Adrenal gland (tissue), 19 donors: ENCODE measurements at regions of chr20 and their contacts with region 1.

Region 1: DNA sequence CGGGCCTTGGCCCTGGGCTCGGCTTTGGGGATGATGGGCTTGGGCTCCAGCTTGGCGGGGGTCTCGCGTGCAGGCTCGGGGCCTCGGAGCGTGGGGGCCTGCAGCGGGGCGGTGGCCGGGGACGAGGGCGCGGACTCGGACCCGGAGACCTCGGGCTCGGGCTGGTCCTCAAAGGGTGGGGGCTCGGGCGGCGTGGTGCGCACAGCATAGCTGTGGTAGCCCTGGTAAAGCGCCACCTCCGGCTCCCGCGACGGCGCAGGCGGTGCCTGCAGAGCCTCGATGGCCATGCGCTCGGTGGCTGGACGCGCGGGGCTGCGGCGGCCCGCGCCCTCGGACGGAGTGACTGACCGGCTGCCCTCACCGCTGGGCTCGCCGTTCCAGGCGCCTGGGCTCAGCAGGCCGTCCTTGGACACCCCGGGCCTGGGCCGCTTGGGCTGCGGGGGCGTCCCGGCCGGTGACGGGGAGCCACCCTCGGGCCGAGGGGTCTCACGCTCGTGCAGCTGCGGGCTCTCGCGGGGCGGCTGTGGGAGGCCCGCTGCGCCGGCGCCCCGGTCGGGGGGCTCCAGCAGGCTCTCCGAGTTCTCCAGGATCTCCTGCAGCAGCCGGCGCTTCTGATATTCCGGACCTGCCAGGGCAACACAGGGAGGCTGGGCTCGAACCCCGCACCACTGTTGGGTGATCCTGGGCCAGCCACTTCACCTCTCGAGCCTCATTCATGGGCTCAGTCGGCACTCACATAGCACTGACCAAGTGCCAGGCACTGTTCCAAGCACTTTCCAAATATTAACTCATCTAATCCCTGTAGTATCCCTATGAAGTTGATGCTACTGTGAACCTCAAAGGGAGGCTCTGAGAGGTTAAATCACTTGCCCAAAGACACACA is 71.0 kb downstream of the JPH2 start:
- DNase-seq: no peak
- H3K4me3 ChIP-seq: no peak overlapping the region
- H3K27ac ChIP-seq: no peak overlapping the region
- H3K4me1 ChIP-seq: no peaks in the 10 kb centered on the region
- H3K27me3 ChIP-seq: peaks cover 9% of the 10 kb centered on the region
- CTCF ChIP-seq: no peak
- POLR2A ChIP-seq: no peak

Region 2: DNA sequence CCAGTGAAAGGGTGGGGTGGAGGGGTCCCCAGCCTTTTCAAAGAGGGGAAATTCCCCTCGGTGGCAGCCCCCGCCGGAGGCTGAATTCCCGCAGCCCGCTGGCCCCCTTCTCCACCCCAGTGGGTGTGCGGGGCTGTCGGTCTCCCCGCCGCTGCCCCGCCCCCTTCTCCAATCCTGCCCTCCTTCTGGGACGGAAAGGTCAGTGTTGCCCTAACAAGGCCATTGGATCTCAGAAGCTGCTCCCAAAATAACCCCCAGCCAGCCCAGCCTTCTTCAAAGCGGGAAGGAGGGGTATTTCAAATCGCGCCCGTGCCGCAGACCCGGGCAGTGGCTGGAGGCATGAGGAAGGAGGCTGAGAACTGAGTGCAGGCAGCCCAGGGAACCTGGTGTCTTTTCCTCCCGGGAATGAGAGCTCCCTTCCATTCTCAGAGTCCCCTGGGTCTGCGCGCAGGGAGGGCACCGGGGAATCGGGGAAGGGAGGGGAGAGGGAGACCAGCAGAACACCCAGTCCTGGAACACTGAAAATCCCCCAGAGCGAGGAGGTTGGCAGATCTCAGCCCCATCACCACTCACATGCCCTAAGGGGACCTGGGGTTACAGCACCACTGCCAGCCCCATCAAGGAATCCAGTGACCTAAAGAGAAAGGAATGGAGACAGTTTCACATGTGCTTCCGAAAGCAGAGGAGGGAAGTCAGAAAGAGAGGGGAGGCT is 71.2 kb after region 1 on chr20 and contains the start of gene JPH2:
- intact Hi-C with region 1: loop called (anchors 2 kb)
- DNase-seq: peak; percentile 36 to 77 (median 57)
- H3K4me3 ChIP-seq: peak within 1 kb of the TSS in 3 of 4 donors; percentile 15 to 61 (median 38)
- H3K27ac ChIP-seq: peak within 1 kb of the TSS in 3 of 5 donors; percentile 15 to 67 (median 25)
- H3K4me1 ChIP-seq: peaks cover 9 to 10% of the 10 kb centered on the region in 2 donors
- H3K27me3 ChIP-seq: no peaks in the 10 kb centered on the region
- CTCF ChIP-seq: no peak
- POLR2A ChIP-seq: peak in 1 of 2 donors; percentile 8
- total RNA-seq, gene JPH2: 0.91 to 13.0 (median 4.4) TPM